ENCODE measurements at regions of chr14 and their contacts with region 1.

Region 1: DNA sequence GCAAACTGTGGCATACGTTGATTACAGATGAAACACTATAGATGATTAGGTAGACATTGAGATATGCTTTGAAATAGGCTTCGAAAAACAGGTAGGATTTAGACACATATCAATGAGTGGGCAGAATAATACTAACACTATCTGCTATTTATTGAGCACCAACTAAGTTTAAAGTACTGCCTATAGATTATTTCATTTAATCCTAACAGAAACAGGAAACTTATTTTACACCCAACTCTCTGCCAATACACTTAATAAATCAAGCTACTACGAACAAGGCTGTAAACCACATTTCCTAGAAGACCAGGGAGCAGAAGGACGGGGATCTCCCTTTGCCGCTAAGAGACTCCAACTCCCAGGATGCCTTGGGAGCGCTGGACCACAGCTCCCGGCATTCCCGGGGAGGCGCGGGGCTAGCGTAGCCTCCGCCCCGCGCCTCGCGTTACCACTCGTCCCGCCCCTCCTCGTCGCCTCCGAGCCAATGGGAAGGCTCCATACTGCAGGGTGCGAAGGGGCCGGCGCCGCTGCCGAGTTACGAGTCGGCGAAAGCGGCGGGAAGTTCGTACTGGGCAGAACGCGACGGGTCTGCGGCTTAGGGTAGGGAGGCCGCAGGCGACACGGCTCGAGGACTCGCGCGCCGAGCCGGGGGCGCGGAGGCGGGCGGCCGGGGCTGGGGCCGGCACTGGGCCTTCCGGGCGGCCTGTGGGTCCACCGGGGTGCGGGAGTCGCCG is at the start of gene VRK1:
- DNase-seq: peak; percentile 96
- H3K4me3 Mint-ChIP-seq: peak within 1 kb of the TSS; percentile 93
- H3K27ac Mint-ChIP-seq: peak within 1 kb of the TSS; percentile 78
- H3K4me1 Mint-ChIP-seq: peaks cover 25% of the 10 kb centered on the region
- H3K27me3 Mint-ChIP-seq: peaks cover 8% of the 10 kb centered on the region
- total RNA-seq, gene VRK1: 76.9 to 77.4 TPM

Region 2: DNA sequence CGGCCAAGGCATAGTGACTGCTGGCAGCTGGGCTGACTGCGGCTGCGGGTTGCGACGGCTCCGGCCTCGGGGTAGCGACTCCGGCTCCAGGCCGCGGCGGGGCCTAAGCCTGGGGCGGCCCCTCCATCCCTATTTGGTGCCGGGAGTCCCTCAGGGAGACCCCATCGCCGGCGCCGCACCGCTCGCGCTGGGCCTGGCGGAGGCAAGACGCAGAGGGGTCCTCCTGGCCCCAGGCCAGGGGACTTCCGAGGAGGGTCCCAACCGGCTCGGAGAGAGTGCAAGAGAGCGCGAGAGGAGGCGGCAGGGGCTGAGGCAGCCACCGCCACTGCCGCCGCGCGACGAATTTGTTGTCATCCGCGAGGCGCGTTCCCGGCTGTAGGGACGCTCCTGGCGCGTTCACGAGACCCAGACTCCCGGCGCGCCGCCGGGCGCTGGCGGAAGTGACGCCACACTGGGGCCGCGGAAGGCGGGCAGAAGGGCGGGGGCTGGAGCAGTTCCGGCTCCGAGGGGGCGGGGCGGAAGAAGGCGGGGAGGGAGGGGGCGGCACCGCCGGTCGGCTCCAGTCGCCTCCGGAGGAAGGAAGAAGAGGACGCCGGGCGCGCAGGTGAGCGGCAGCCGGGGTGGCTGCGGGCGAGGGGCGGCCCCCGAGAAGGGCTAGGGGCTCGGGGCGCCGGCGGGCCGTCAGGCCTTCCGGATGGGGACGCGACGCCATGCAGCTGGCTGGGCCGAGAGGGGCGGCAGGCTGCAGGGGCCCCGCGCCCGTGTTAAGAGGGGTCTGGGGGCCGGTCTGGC is 433.9 kb before region 1 on chr14 and contains the starts of genes ATG2B and GSKIP:
- CTCF ChIA-PET with region 1: no interaction called
- POLR2A ChIA-PET with region 1: no interaction called
- intact Hi-C with region 1: loop called (anchors 2 kb)
- DNase-seq: peak; percentile 98
- H3K4me3 Mint-ChIP-seq: peak within 1 kb of the TSS; percentile 83
- H3K27ac Mint-ChIP-seq: peak within 1 kb of the TSS; percentile 83
- H3K4me1 Mint-ChIP-seq: peaks cover 50% of the 10 kb centered on the region
- H3K27me3 Mint-ChIP-seq: no peaks in the 10 kb centered on the region
- total RNA-seq, gene ATG2B: 12.0 to 12.8 TPM
- total RNA-seq, gene GSKIP: 22.8 to 29.7 TPM

Region 3: DNA sequence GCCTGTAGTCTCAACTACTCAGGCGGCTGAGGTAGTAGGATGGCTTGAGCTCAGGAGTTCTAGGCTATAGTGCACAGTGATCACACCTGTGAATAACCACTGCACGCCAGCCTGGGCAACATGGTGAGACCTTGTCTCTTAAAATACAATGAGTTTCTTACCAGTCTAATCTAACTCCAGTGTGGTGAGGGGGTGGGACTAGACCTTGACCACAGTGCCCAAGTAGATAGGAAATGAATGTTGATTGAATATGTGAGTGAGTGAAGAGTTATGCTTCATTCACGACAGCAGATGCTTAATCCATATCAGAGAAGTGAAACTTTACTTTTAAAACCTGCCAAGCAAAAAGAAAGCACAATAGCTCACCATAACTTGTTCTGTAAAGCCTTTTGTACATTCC is 416.3 kb before region 1 on chr14:
- CTCF ChIA-PET with region 1: no interaction called
- POLR2A ChIA-PET with region 1: no interaction called
- intact Hi-C with region 1: no loop called
- DNase-seq: peak; percentile 17
- H3K4me3 Mint-ChIP-seq: no peak overlapping the region
- H3K27ac Mint-ChIP-seq: no peak overlapping the region
- H3K4me1 Mint-ChIP-seq: peaks cover 3% of the 10 kb centered on the region
- H3K27me3 Mint-ChIP-seq: no peaks in the 10 kb centered on the region

Region 4: GRCh38 chr14:96710060-96710666 is 86.9 kb before region 1 on chr14:
- CTCF ChIA-PET with region 1: no interaction called
- POLR2A ChIA-PET with region 1: no interaction called
- intact Hi-C with region 1: no loop called
- DNase-seq: no peak
- H3K4me3 Mint-ChIP-seq: no peak overlapping the region
- H3K27ac Mint-ChIP-seq: no peak overlapping the region
- H3K4me1 Mint-ChIP-seq: peaks cover 2% of the 10 kb centered on the region
- H3K27me3 Mint-ChIP-seq: peaks cover 16% of the 10 kb centered on the region

Region 5: GRCh38 chr14:96762650-96763049 is 34.4 kb before region 1 on chr14:
- CTCF ChIA-PET with region 1: no interaction called
- POLR2A ChIA-PET with region 1: interaction called, 3 read pairs
- intact Hi-C with region 1: loop called (anchors 2 kb)
- DNase-seq: peak; percentile 10
- H3K4me3 Mint-ChIP-seq: peak overlapping the region; percentile 47
- H3K27ac Mint-ChIP-seq: no peak overlapping the region
- H3K4me1 Mint-ChIP-seq: no peaks in the 10 kb centered on the region
- H3K27me3 Mint-ChIP-seq: peaks cover 7% of the 10 kb centered on the region

Region 6: DNA sequence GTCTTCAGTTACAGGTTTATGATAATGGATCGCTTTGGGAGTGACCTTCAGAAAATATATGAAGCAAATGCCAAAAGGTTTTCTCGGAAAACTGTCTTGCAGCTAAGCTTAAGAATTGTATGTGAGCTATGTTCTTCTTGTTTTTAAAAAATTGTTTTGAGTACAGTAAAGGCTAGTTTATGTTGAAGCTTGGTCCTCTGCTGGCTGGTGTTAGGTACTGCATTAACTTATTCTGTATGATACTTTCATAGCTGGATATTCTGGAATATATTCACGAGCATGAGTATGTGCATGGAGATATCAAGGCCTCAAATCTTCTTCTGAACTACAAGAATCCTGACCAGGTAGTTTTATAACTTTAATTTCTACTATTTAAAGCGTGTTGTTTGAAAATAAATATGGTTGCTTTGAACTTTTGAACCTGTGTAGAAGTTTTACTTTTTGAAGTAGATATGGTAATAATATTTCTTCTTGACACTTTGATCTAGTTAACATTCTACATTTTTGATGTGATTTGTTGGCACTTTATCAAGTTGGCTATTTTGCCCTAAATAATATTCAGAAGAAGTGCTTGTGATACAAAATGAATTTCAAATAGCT is 55.9 kb after region 1 on chr14:
- CTCF ChIA-PET with region 1: interaction called, 13 read pairs
- POLR2A ChIA-PET with region 1: no interaction called
- intact Hi-C with region 1: loop called (anchors 2 kb)
- DNase-seq: no peak
- H3K4me3 Mint-ChIP-seq: no peak overlapping the region
- H3K27ac Mint-ChIP-seq: no peak overlapping the region
- H3K4me1 Mint-ChIP-seq: peaks cover 17% of the 10 kb centered on the region
- H3K27me3 Mint-ChIP-seq: no peaks in the 10 kb centered on the region